B cell (primary cell): ENCODE measurements at regions of chr2 and their contacts with region 1.

Region 1: GRCh38 chr2:237966565-237967462 is at the start of gene UBE2F:
- DNase-seq: peak; percentile 97
- ATAC-seq: peak; percentile 94
- H3K4me3 ChIP-seq: peak within 1 kb of the TSS; percentile 54 to 96 (median 73)
- H3K4me3 Mint-ChIP-seq: peak within 1 kb of the TSS; percentile 81
- H3K27ac ChIP-seq: peak within 1 kb of the TSS; percentile 45 to 50
- H3K27ac Mint-ChIP-seq: peak within 1 kb of the TSS; percentile 88
- H3K4me1 ChIP-seq: peaks cover 27 to 32% of the 10 kb centered on the region in 2 donors
- H3K4me1 Mint-ChIP-seq: peaks cover 36% of the 10 kb centered on the region
- H3K27me3 ChIP-seq: no peaks in the 10 kb centered on the region
- H3K27me3 Mint-ChIP-seq: no peaks in the 10 kb centered on the region
- CTCF ChIP-seq: no peak
- total RNA-seq, gene UBE2F: 56.6 and 57.6 TPM in 2 replicates

Region 2: DNA sequence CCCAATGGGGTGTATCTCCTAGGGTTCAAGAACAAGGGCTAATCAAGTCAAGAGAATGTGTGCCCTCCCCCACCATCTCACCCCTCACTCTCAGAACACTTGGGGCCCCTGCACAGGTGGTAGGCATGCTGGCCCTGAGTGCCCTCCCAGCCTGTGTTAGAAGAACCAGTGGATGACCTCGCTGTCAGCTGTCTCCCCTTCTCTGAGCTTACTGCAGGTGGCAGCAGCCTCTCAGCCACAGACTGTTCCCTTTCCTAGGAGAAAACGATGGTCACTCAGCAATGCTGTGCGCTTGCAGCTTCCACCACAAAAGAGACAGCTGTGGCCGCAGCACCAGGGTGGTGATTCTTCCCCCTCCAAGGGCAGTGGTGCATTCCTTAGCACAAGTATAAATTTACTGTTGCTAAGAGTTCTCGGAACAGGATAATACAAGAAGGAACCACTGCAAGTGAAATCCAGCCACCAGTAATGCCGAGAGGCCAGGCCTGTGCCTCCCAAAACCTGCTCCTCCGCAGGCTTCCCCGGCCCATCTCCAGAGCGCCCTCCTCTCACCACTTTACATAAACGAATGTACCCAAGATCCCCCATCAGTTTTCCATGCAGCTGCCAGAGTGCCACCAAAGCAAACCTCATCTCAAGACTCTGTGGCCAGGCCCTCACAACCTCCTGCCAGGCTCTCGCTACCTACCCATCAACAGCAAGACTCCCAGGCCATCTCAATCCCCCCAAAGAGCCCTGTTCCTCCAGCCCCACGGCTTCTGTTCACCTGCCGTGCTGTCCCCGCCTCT is 108.3 kb before region 1 on chr2:
- CTCF ChIA-PET with region 1: interaction called, 6 read pairs
- POLR2A ChIA-PET with region 1: no interaction called
- intact Hi-C with region 1: loop called (anchors 1 kb)
- DNase-seq: peak; percentile 43
- ATAC-seq: peak; percentile 80
- H3K4me3 ChIP-seq: no peak overlapping the region
- H3K4me3 Mint-ChIP-seq: peak overlapping the region; percentile 62
- H3K27ac ChIP-seq: no peak overlapping the region
- H3K27ac Mint-ChIP-seq: no peak overlapping the region
- H3K4me1 ChIP-seq: no peaks in the 10 kb centered on the region
- H3K4me1 Mint-ChIP-seq: peaks cover 17% of the 10 kb centered on the region
- H3K27me3 ChIP-seq: peaks cover 0 to 37% (median 13%) of the 10 kb centered on the region in 4 experiments
- H3K27me3 Mint-ChIP-seq: peaks cover 44% of the 10 kb centered on the region
- CTCF ChIP-seq: peak; percentile 43

Region 3: GRCh38 chr2:238015705-238016104 is 48.9 kb after region 1 on chr2:
- CTCF ChIA-PET with region 1: interaction called, 3 read pairs
- POLR2A ChIA-PET with region 1: no interaction called
- intact Hi-C with region 1: loop called (anchors 5 kb)
- DNase-seq: no peak
- ATAC-seq: no peak
- H3K4me3 ChIP-seq: no peak overlapping the region
- H3K4me3 Mint-ChIP-seq: no peak overlapping the region
- H3K27ac ChIP-seq: no peak overlapping the region
- H3K27ac Mint-ChIP-seq: no peak overlapping the region
- H3K4me1 ChIP-seq: peaks cover 0 to 5% of the 10 kb centered on the region in 2 donors
- H3K4me1 Mint-ChIP-seq: peaks cover 6% of the 10 kb centered on the region
- H3K27me3 ChIP-seq: no peaks in the 10 kb centered on the region
- H3K27me3 Mint-ChIP-seq: no peaks in the 10 kb centered on the region
- CTCF ChIP-seq: no peak

Region 4: GRCh38 chr2:238106686-238107524 is 140.1 kb after region 1 on chr2:
- CTCF ChIA-PET with region 1: no interaction called
- POLR2A ChIA-PET with region 1: interaction called, 5 read pairs
- intact Hi-C with region 1: loop called (anchors 2 kb)
- DNase-seq: peak; percentile 37
- ATAC-seq: peak; percentile 1
- H3K4me3 ChIP-seq: peak overlapping the region in 4 of 5 experiments; percentile 26 to 62 (median 34)
- H3K4me3 Mint-ChIP-seq: peak overlapping the region; percentile 94
- H3K27ac ChIP-seq: peak overlapping the region; percentile 55 to 71
- H3K27ac Mint-ChIP-seq: peak overlapping the region; percentile 92
- H3K4me1 ChIP-seq: peaks cover 35 to 45% of the 10 kb centered on the region in 2 donors
- H3K4me1 Mint-ChIP-seq: peaks cover 29% of the 10 kb centered on the region
- H3K27me3 ChIP-seq: no peaks in the 10 kb centered on the region
- H3K27me3 Mint-ChIP-seq: no peaks in the 10 kb centered on the region
- CTCF ChIP-seq: peak; percentile 60

Region 5: GRCh38 chr2:238263204-238264071 is 296.6 kb after region 1 on chr2:
- CTCF ChIA-PET with region 1: interaction called, 18 read pairs
- POLR2A ChIA-PET with region 1: no interaction called
- intact Hi-C with region 1: no loop called
- DNase-seq: peak; percentile 78
- ATAC-seq: peak; percentile 66
- H3K4me3 ChIP-seq: no peak overlapping the region
- H3K4me3 Mint-ChIP-seq: no peak overlapping the region
- H3K27ac ChIP-seq: no peak overlapping the region
- H3K27ac Mint-ChIP-seq: no peak overlapping the region
- H3K4me1 ChIP-seq: peaks cover 0 to 4% of the 10 kb centered on the region in 2 donors
- H3K4me1 Mint-ChIP-seq: peaks cover 1% of the 10 kb centered on the region
- H3K27me3 ChIP-seq: no peaks in the 10 kb centered on the region
- H3K27me3 Mint-ChIP-seq: no peaks in the 10 kb centered on the region
- CTCF ChIP-seq: peak; percentile 84